CD4-positive, alpha-beta memory T cell (primary cell): ENCODE measurements at regions of chr9 and their contacts with region 1.

Region 1: DNA sequence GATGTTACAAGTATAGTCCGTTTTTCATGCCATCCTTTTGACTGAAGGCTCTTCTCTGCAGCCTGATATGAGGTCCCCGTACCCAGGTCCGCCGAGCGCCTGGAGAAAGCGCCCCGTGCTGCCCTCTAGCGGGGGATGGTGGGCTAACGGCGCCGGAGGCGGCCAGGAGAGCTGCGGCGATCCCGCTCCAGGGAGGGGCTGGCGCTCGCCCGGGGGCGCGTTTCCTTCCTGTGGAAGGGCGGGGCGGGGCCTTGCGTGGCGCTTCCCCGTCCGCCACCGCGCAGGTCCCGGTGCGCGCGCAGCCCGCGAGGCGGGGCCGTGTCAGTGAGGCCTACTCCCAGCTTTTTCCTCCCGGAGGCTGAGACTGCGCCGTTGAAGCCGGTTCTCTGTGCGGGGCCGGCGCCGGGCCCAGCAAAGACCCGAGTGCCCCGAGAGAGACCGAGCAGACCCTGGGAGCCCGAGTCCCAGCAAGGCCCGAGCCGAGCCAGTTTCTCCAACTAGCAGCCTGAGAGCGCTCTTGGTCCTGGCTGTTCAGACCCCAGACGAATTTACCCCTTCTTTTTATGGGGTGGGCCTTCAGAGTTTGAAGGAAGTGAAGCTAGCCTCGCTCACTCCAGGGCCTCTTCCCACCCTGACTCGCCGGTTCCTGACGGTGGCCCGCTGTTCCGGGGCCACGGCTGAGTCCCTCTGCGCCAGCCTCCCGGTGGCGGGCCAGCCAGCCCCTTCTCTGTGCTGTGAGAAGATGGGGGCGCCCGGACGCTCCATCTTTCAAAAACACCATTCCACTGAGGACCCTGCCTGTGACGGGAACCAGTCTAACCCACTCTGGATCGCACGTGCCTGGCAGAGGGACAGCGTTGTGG is 9.7 kb upstream of the PHF2 start:
- DNase-seq: peak; percentile 95 to 99 (median 98)
- H3K4me3 ChIP-seq: peak overlapping the region; percentile 30 to 65
- H3K4me3 Mint-ChIP-seq: peak overlapping the region; percentile 79 to 89 (median 83)
- H3K27ac ChIP-seq: peak overlapping the region; percentile 90
- H3K27ac Mint-ChIP-seq: peak overlapping the region; percentile 87 to 97 (median 93)
- H3K4me1 ChIP-seq: peaks cover 25% of the 10 kb centered on the region
- H3K4me1 Mint-ChIP-seq: peaks cover 9 to 29% (median 21%) of the 10 kb centered on the region in 4 donors
- H3K27me3 ChIP-seq: no peaks in the 10 kb centered on the region
- H3K27me3 Mint-ChIP-seq: no peaks in the 10 kb centered on the region

Region 2: DNA sequence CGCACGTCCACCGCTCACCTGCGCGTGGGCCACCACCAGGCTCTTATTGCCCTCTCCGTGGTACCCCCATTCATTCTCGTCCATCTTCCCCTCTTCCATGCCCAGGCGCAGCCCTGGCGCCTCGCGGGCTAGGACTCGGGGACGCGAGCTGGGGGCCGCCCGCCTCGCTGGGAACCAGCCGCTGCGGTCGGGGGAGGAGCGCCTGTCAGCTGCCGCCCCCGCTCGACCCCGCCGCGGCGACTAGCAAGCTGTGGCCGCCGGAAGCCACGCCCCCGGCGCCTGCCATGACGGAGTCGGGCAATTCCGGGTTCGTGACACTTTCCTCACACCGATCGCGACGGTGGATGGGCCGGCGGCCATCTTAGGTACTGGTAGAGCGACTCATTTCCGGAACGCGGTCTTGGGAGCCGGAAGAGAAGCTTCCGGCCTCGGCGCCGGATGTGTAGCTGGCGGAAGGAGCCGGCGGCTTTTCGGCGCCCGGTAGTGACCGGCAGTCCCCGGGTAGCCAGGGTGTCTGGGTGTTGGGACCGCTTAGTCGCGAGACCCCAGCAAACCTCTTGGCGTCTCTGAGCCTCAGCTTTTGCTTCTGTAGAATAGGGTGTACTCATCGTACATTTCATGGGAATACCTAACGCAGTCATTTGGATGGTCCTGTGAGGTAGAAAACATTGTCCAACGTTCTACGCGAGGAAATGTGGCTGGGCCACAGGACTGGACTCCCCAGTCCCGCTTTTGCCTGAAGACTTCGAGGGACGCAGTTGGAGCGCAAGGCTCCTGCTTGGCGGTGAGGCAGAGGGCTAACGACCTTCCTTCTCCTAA is 896.5 kb before region 1 on chr9 and contains the start of gene IPPK:
- CTCF ChIA-PET with region 1: no interaction called
- POLR2A ChIA-PET with region 1: interaction called, 6 read pairs
- intact Hi-C with region 1: loop called (anchors 5 kb)
- DNase-seq: peak; percentile 95 to 98 (median 97)
- H3K4me3 ChIP-seq: peak within 1 kb of the TSS; percentile 89 to 90
- H3K4me3 Mint-ChIP-seq: peak within 1 kb of the TSS; percentile 94 to 99 (median 96)
- H3K27ac ChIP-seq: peak within 1 kb of the TSS; percentile 97
- H3K27ac Mint-ChIP-seq: peak within 1 kb of the TSS; percentile 97 to 99 (median 98)
- H3K4me1 ChIP-seq: peaks cover 29% of the 10 kb centered on the region
- H3K4me1 Mint-ChIP-seq: peaks cover 24 to 45% (median 35%) of the 10 kb centered on the region in 4 donors
- H3K27me3 ChIP-seq: no peaks in the 10 kb centered on the region
- H3K27me3 Mint-ChIP-seq: no peaks in the 10 kb centered on the region
- total RNA-seq, gene IPPK: 7.2 to 7.9 TPM

Region 3: DNA sequence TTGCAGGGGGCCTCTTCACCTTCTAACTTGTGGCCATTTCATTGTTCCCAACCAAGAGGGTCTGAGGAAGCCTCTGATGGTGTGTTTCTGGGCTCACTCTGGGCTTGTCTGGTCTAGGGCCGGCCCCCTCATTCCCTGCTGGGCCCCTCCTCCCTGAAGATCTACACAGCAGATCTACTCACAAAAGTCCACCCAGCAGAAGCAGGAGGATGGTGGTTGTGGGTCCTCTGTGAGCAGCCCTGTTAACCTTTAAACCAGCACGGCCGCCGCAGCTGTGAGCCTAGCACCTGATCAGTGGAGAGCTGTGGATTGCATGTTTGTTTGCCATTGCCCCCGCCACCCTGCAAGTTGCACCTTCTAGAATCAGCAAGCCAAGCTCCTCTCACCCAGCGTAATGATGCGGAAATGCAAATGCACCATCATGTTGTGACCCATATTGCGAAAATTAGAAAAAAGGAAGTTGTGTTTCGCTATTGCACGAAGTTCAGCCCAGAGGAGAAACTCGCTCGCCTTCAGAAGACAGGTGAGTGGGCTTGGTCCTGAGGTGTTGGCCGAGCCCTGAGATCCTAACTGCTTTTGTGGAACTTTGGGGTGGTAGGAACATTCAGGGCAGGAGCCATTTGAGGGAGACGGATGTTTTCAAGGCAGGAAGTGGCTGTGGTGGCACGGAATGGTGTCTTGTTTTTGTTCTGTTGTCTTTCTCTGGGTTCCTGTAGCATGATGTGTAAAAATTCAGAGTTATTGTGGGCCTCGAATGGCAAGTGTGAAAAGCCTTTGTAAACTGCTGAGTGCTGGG is 602.6 kb before region 1 on chr9:
- CTCF ChIA-PET with region 1: no interaction called
- POLR2A ChIA-PET with region 1: interaction called, 7 read pairs
- intact Hi-C with region 1: loop called (anchors 5 kb)
- DNase-seq: peak; percentile 87 to 92 (median 90)
- H3K4me3 ChIP-seq: peak overlapping the region; percentile 86 to 97
- H3K4me3 Mint-ChIP-seq: peak overlapping the region; percentile 93 to 99 (median 94)
- H3K27ac ChIP-seq: peak overlapping the region; percentile 84
- H3K27ac Mint-ChIP-seq: peak overlapping the region; percentile 96 to 100 (median 98)
- H3K4me1 ChIP-seq: peaks cover 81% of the 10 kb centered on the region
- H3K4me1 Mint-ChIP-seq: peaks cover 30 to 90% (median 57%) of the 10 kb centered on the region in 4 donors
- H3K27me3 ChIP-seq: no peaks in the 10 kb centered on the region
- H3K27me3 Mint-ChIP-seq: no peaks in the 10 kb centered on the region

Region 4: GRCh38 chr9:93134015-93134739 is 432.5 kb before region 1 on chr9 and contains the start of gene NINJ1:
- CTCF ChIA-PET with region 1: interaction called, 4 read pairs
- POLR2A ChIA-PET with region 1: interaction called, 3 read pairs
- intact Hi-C with region 1: loop called (anchors 10 kb)
- DNase-seq: peak; percentile 87 to 96 (median 89)
- H3K4me3 ChIP-seq: peak within 1 kb of the TSS; percentile 52 to 82
- H3K4me3 Mint-ChIP-seq: peak within 1 kb of the TSS; percentile 88 to 96 (median 90)
- H3K27ac ChIP-seq: peak within 1 kb of the TSS; percentile 92
- H3K27ac Mint-ChIP-seq: peak within 1 kb of the TSS; percentile 97 to 99 (median 99)
- H3K4me1 ChIP-seq: peaks cover 48% of the 10 kb centered on the region
- H3K4me1 Mint-ChIP-seq: peaks cover 26 to 79% (median 50%) of the 10 kb centered on the region in 4 donors
- H3K27me3 ChIP-seq: no peaks in the 10 kb centered on the region
- H3K27me3 Mint-ChIP-seq: no peaks in the 10 kb centered on the region
- total RNA-seq, gene NINJ1: 31.1 to 31.3 TPM

Region 5: GRCh38 chr9:93379051-93379450 is 187.6 kb before region 1 on chr9:
- CTCF ChIA-PET with region 1: no interaction called
- POLR2A ChIA-PET with region 1: no interaction called
- intact Hi-C with region 1: no loop called
- DNase-seq: no peak
- H3K4me3 ChIP-seq: no peak overlapping the region
- H3K4me3 Mint-ChIP-seq: no peak overlapping the region
- H3K27ac ChIP-seq: no peak overlapping the region
- H3K27ac Mint-ChIP-seq: no peak overlapping the region
- H3K4me1 ChIP-seq: no peaks in the 10 kb centered on the region
- H3K4me1 Mint-ChIP-seq: no peaks in the 10 kb centered on the region
- H3K27me3 ChIP-seq: peaks cover 4% of the 10 kb centered on the region
- H3K27me3 Mint-ChIP-seq: peaks cover 4 to 7% of the 10 kb centered on the region in 2 donors

Region 6: GRCh38 chr9:93447655-93448054 is 119.0 kb before region 1 on chr9:
- CTCF ChIA-PET with region 1: interaction called, 22 read pairs
- POLR2A ChIA-PET with region 1: interaction called, 19 read pairs
- intact Hi-C with region 1: no loop called
- DNase-seq: no peak
- H3K4me3 ChIP-seq: no peak overlapping the region
- H3K4me3 Mint-ChIP-seq: no peak overlapping the region
- H3K27ac ChIP-seq: no peak overlapping the region
- H3K27ac Mint-ChIP-seq: peak overlapping the region in 5 of 7 donors; percentile 29 to 80 (median 56)
- H3K4me1 ChIP-seq: peaks cover 16% of the 10 kb centered on the region
- H3K4me1 Mint-ChIP-seq: peaks cover 11 to 32% (median 20%) of the 10 kb centered on the region in 4 donors
- H3K27me3 ChIP-seq: no peaks in the 10 kb centered on the region
- H3K27me3 Mint-ChIP-seq: no peaks in the 10 kb centered on the region

Region 7: GRCh38 chr9:94166237-94166963 is 599.8 kb after region 1 on chr9:
- CTCF ChIA-PET with region 1: no interaction called
- POLR2A ChIA-PET with region 1: interaction called, 7 read pairs
- intact Hi-C with region 1: loop called (anchors 10 kb)
- DNase-seq: peak; percentile 93 to 96 (median 94)
- H3K4me3 ChIP-seq: peak overlapping the region in 1 of 2 donors; percentile 80
- H3K4me3 Mint-ChIP-seq: peak overlapping the region; percentile 79 to 98 (median 90)
- H3K27ac ChIP-seq: peak overlapping the region; percentile 98
- H3K27ac Mint-ChIP-seq: peak overlapping the region; percentile 90 to 96 (median 95)
- H3K4me1 ChIP-seq: peaks cover 48% of the 10 kb centered on the region
- H3K4me1 Mint-ChIP-seq: peaks cover 34 to 64% (median 45%) of the 10 kb centered on the region in 4 donors
- H3K27me3 ChIP-seq: no peaks in the 10 kb centered on the region
- H3K27me3 Mint-ChIP-seq: no peaks in the 10 kb centered on the region